CD4-positive, alpha-beta memory T cell (primary cell): ENCODE measurements at regions of chr13 and their contacts with region 1.

Region 1: GRCh38 chr13:60448907-60449510 is 52.0 kb downstream of the TDRD3 start:
- DNase-seq: peak in 2 of 5 donors; percentile 6 to 22
- H3K4me3 ChIP-seq: no peak overlapping the region
- H3K4me3 Mint-ChIP-seq: no peak overlapping the region
- H3K27ac ChIP-seq: no peak overlapping the region
- H3K27ac Mint-ChIP-seq: no peak overlapping the region
- H3K4me1 ChIP-seq: no peaks in the 10 kb centered on the region
- H3K4me1 Mint-ChIP-seq: no peaks in the 10 kb centered on the region
- H3K27me3 ChIP-seq: no peaks in the 10 kb centered on the region
- H3K27me3 Mint-ChIP-seq: no peaks in the 10 kb centered on the region

Region 2: GRCh38 chr13:60463787-60464186 is 14.8 kb after region 1 on chr13:
- CTCF ChIA-PET with region 1: interaction called, 10 read pairs
- POLR2A ChIA-PET with region 1: no interaction called
- intact Hi-C with region 1: no loop called
- DNase-seq: no peak
- H3K4me3 ChIP-seq: no peak overlapping the region
- H3K4me3 Mint-ChIP-seq: no peak overlapping the region
- H3K27ac ChIP-seq: no peak overlapping the region
- H3K27ac Mint-ChIP-seq: peak overlapping the region in 1 of 7 donors; percentile 84
- H3K4me1 ChIP-seq: no peaks in the 10 kb centered on the region
- H3K4me1 Mint-ChIP-seq: peaks cover 0 to 9% (median 5%) of the 10 kb centered on the region in 4 donors
- H3K27me3 ChIP-seq: no peaks in the 10 kb centered on the region
- H3K27me3 Mint-ChIP-seq: no peaks in the 10 kb centered on the region

Region 3: DNA sequence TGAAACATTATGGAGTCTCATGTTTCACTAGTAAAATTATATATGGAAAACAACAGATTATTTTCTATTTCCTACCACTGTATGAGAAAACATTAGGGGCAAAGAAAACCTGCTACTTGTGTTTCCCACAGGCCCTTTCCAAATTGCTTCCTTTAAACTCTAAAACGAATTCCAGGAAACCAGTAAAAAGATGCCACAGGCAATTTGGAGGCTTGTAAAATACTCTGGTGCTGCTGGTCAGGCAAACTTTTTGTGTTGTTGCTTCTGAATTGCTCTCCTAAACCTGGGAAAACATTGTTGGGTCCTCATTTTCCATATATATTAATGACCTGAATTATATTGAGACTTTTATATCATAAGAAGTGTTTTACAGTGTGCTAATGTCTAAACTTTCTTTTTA is 89.6 kb after region 1 on chr13:
- CTCF ChIA-PET with region 1: no interaction called
- POLR2A ChIA-PET with region 1: no interaction called
- intact Hi-C with region 1: no loop called
- DNase-seq: no peak
- H3K4me3 ChIP-seq: no peak overlapping the region
- H3K4me3 Mint-ChIP-seq: no peak overlapping the region
- H3K27ac ChIP-seq: no peak overlapping the region
- H3K27ac Mint-ChIP-seq: no peak overlapping the region
- H3K4me1 ChIP-seq: no peaks in the 10 kb centered on the region
- H3K4me1 Mint-ChIP-seq: no peaks in the 10 kb centered on the region
- H3K27me3 ChIP-seq: no peaks in the 10 kb centered on the region
- H3K27me3 Mint-ChIP-seq: no peaks in the 10 kb centered on the region